ENCODE measurements at regions of chr9 and their contacts with region 1.

Region 1: DNA sequence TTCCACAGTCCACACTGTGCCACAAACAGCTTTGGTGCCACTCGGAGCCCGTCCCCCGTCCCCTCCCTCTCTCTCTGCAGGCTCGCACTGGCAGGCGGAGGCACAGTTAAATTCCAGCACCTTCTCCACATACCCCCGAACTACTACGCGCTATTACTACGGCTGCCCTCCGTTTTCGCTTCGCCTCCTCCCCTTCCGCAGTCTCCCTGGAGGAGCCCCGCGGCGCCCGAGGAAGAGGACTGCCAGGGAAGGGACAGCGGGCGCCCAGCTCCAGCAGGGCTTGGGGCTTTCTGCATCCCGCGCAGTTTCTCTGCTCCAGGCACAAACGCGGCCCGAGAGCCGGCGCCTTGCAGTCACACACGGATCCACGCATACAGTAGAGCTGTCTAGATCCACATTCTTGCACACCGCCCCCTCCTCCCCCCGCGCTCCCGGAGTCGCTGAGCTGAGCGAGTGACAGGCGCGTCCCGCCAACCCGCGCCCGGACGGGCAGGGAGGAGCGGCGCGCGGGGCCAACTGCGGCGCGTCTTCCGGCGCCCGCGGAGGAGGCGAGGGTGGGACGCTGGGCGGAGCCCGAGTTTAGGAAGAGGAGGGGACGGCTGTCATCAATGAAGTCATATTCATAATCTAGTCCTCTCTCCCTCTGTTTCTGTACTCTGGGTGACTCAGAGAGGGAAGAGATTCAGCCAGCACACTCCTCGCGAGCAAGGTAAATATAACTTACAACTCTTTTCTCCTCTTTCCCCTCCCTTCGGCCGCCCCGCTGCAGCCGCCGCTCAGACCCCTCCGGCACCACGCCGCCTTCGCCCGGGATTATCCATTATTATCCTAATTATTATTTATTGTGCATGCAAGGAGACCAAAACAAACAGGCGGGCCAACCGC is at the start of gene SMARCA2:
- DNase-seq: peak; percentile 98
- ATAC-seq: peak; percentile 87 to 96 (median 92)
- H3K4me3 ChIP-seq: peak within 1 kb of the TSS; percentile 62 to 97 (median 88)
- H3K27ac ChIP-seq: peak within 1 kb of the TSS; percentile 92 to 99 (median 97)
- H3K4me1 ChIP-seq: peaks cover 0 to 30% (median 23%) of the 10 kb centered on the region in 9 donors
- H3K27me3 ChIP-seq: no peaks in the 10 kb centered on the region
- CTCF ChIP-seq: peak in 1 of 9 donors; percentile 2
- total RNA-seq, gene SMARCA2: 76.1 to 140 (median 114) TPM

Region 2: GRCh38 chr9:2053883-2054845 is 39.2 kb after region 1 on chr9:
- intact Hi-C with region 1: loop called in 2 of 10 experiments (anchors 5 kb)
- DNase-seq: no peak
- ATAC-seq: peak in 3 of 8 donors; percentile 35 to 71 (median 52)
- H3K4me3 ChIP-seq: no peak overlapping the region
- H3K27ac ChIP-seq: peak overlapping the region in 1 of 10 donors; percentile 57
- H3K4me1 ChIP-seq: peaks cover 0 to 31% (median 10%) of the 10 kb centered on the region in 9 donors
- H3K27me3 ChIP-seq: no peaks in the 10 kb centered on the region
- CTCF ChIP-seq: no peak

Region 3: DNA sequence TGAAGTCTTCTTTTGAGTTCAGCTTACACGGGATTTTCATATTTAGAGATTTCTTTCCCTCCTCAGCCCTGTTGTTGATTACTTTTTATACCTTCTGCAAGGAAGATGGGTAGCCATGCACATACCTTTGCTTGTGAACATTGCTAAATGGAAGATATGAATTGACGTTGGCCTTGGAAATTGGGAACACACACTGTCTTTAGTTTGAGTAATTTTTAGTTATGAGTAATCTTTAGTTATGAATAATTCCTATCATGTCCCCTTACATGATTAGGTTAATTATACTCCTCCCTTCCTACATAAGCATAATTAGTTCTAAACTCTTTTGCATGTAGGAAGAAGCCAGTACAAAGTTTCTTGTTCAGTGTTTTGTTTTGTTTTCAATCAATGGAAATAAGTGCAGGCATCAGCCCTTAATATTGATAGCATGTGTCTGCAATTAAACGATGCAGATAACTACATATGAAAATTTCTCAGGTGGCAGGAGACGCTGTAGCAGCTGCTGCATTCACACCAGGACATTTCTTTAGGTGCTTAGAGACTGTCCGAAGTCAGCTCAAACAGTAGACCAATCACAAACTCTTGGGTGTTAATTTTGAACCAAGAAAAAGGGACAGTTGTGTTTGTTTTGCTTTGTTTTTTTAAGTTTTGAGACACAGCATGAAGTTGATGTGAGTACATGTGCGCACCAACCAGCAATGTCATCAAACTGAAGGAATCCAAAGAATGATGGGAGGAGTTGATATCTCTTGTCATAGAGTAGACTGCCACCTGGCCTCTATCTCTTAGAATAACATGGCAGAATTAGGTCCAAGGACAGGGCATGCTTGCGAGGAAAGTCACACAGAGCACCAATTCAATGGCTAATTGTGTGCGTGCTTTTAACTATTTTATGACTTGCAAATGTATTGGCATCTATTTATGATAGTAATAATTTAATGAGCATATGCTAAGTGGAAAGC is 51.7 kb after region 1 on chr9:
- intact Hi-C with region 1: loop called in 5 of 10 experiments (anchors 5 to 10 kb)
- DNase-seq: no peak
- ATAC-seq: peak in 3 of 8 donors; percentile 46 to 50 (median 46)
- H3K4me3 ChIP-seq: no peak overlapping the region
- H3K27ac ChIP-seq: no peak overlapping the region
- H3K4me1 ChIP-seq: peaks cover 0 to 2% (median 0%) of the 10 kb centered on the region in 9 donors
- H3K27me3 ChIP-seq: no peaks in the 10 kb centered on the region
- CTCF ChIP-seq: peak in 7 of 9 donors; percentile 15 to 54 (median 39)

Region 4: DNA sequence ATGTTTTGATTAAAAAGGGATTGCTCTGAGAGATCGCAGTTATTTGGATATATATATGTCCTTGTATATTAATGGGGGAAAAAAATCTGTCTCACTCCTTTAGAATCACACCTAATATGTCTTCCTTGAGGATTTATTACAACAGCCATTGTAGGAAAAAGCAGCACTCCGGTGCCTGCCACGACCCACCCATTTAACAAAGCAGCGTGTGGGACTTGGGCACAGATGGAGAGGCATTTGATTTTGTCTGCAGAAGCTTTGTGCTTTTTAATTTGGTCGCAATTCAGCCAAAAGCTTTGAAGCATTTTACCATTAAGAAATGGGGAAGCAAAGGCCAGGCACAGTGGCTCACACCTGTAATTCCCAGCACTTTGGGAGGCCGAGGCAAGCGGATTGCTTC is 159.4 kb after region 1 on chr9:
- intact Hi-C with region 1: no loop called
- DNase-seq: no peak
- ATAC-seq: no peak
- H3K4me3 ChIP-seq: no peak overlapping the region
- H3K27ac ChIP-seq: no peak overlapping the region
- H3K4me1 ChIP-seq: peaks cover 0 to 18% (median 4%) of the 10 kb centered on the region in 9 donors
- H3K27me3 ChIP-seq: no peaks in the 10 kb centered on the region
- CTCF ChIP-seq: no peak

Region 5: GRCh38 chr9:2241836-2242741 is 227.2 kb after region 1 on chr9:
- intact Hi-C with region 1: loop called in 1 of 10 experiments (anchors 5 kb)
- DNase-seq: peak; percentile 79 to 82
- ATAC-seq: peak; percentile 89 to 97 (median 96)
- H3K4me3 ChIP-seq: peak overlapping the region; percentile 7 to 68 (median 54)
- H3K27ac ChIP-seq: peak overlapping the region in 9 of 10 donors; percentile 54 to 80 (median 67)
- H3K4me1 ChIP-seq: peaks cover 0 to 23% (median 14%) of the 10 kb centered on the region in 9 donors
- H3K27me3 ChIP-seq: no peaks in the 10 kb centered on the region
- CTCF ChIP-seq: peak in 2 of 9 donors; percentile 3 to 24

Region 6: GRCh38 chr9:2849941-2850340 is 835.0 kb after region 1 on chr9:
- intact Hi-C with region 1: loop called in 2 of 10 experiments (anchors 5 to 10 kb)
- DNase-seq: no peak
- ATAC-seq: no peak
- H3K4me3 ChIP-seq: no peak overlapping the region
- H3K27ac ChIP-seq: no peak overlapping the region
- H3K4me1 ChIP-seq: peaks cover 1 to 12% (median 8%) of the 10 kb centered on the region in 9 donors
- H3K27me3 ChIP-seq: no peaks in the 10 kb centered on the region
- CTCF ChIP-seq: no peak

Measured in heart right ventricle (tissue), 16 donors.